ENCODE measurements at regions of chr1 and their contacts with region 1.

Region 1: GRCh38 chr1:37595440-37596319 is at the start of gene GNL2:
- DNase-seq: peak; percentile 99 to 100
- ATAC-seq: peak; percentile 100
- H3K4me3 ChIP-seq: peak within 1 kb of the TSS; percentile 48 to 52
- H3K27ac ChIP-seq: peak within 1 kb of the TSS in 1 of 2 donors; percentile 43
- H3K4me1 ChIP-seq: no peaks in the 10 kb centered on the region
- H3K27me3 ChIP-seq: no peaks in the 10 kb centered on the region
- total RNA-seq, gene GNL2: 33.9 to 43.4 TPM

Region 2: GRCh38 chr1:37514350-37515184 is 81.1 kb before region 1 on chr1 and contains the start of gene MEAF6:
- intact Hi-C with region 1: loop called in 1 of 2 experiments (anchors 5 kb)
- DNase-seq: peak; percentile 86 to 95
- ATAC-seq: peak; percentile 100
- H3K4me3 ChIP-seq: peak within 1 kb of the TSS; percentile 84 to 86
- H3K27ac ChIP-seq: peak within 1 kb of the TSS in 1 of 2 donors; percentile 98
- H3K4me1 ChIP-seq: no peaks in the 10 kb centered on the region
- H3K27me3 ChIP-seq: no peaks in the 10 kb centered on the region
- total RNA-seq, gene MEAF6: 42.4 to 50.1 TPM

Region 3: GRCh38 chr1:37553927-37554808 is 41.5 kb before region 1 on chr1 and contains the start of gene SNIP1:
- intact Hi-C with region 1: loop called in 1 of 2 experiments (anchors 5 kb)
- DNase-seq: peak; percentile 94 to 95
- ATAC-seq: peak; percentile 95
- H3K4me3 ChIP-seq: peak within 1 kb of the TSS; percentile 24 to 98
- H3K27ac ChIP-seq: peak within 1 kb of the TSS in 1 of 2 donors; percentile 45
- H3K4me1 ChIP-seq: peaks cover 0 to 3% of the 10 kb centered on the region in 2 donors
- H3K27me3 ChIP-seq: no peaks in the 10 kb centered on the region
- total RNA-seq, gene SNIP1: 16.0 to 20.3 TPM

Region 4: GRCh38 chr1:37692078-37692833 is 96.6 kb after region 1 on chr1 and contains the start of gene CDCA8:
- intact Hi-C with region 1: loop called in 1 of 2 experiments (anchors 5 kb)
- DNase-seq: peak; percentile 99
- ATAC-seq: peak; percentile 97
- H3K4me3 ChIP-seq: peak within 1 kb of the TSS; percentile 55 to 57
- H3K27ac ChIP-seq: peak within 1 kb of the TSS in 1 of 2 donors; percentile 50
- H3K4me1 ChIP-seq: no peaks in the 10 kb centered on the region
- H3K27me3 ChIP-seq: no peaks in the 10 kb centered on the region
- total RNA-seq, gene CDCA8: 0.71 to 1.2 TPM

Region 5: GRCh38 chr1:37859507-37860345 is 264.0 kb after region 1 on chr1 and contains the start of gene MTF1:
- intact Hi-C with region 1: loop called in 1 of 2 experiments (anchors 5 kb)
- DNase-seq: peak; percentile 98 to 99
- ATAC-seq: peak; percentile 99
- H3K4me3 ChIP-seq: peak within 1 kb of the TSS; percentile 80 to 86
- H3K27ac ChIP-seq: peak within 1 kb of the TSS in 1 of 2 donors; percentile 37
- H3K4me1 ChIP-seq: no peaks in the 10 kb centered on the region
- H3K27me3 ChIP-seq: no peaks in the 10 kb centered on the region
- total RNA-seq, gene MTF1: 21.0 to 23.5 TPM

Region 6: GRCh38 chr1:38012363-38013226 is 416.9 kb after region 1 on chr1 and contains the start of gene UTP11:
- intact Hi-C with region 1: loop called in 1 of 2 experiments (anchors 10 kb)
- DNase-seq: peak; percentile 95 to 96
- ATAC-seq: peak; percentile 97
- H3K4me3 ChIP-seq: peak within 1 kb of the TSS; percentile 52 to 69
- H3K27ac ChIP-seq: peak within 1 kb of the TSS in 1 of 2 donors; percentile 73
- H3K4me1 ChIP-seq: peaks cover 0 to 4% of the 10 kb centered on the region in 2 donors
- H3K27me3 ChIP-seq: no peaks in the 10 kb centered on the region
- total RNA-seq, gene UTP11: 28.4 to 28.8 TPM

Measured in aorta (tissue), 5 donors.